ENCODE measurements at regions of chr1 and their contacts with region 1.

Region 1: DNA sequence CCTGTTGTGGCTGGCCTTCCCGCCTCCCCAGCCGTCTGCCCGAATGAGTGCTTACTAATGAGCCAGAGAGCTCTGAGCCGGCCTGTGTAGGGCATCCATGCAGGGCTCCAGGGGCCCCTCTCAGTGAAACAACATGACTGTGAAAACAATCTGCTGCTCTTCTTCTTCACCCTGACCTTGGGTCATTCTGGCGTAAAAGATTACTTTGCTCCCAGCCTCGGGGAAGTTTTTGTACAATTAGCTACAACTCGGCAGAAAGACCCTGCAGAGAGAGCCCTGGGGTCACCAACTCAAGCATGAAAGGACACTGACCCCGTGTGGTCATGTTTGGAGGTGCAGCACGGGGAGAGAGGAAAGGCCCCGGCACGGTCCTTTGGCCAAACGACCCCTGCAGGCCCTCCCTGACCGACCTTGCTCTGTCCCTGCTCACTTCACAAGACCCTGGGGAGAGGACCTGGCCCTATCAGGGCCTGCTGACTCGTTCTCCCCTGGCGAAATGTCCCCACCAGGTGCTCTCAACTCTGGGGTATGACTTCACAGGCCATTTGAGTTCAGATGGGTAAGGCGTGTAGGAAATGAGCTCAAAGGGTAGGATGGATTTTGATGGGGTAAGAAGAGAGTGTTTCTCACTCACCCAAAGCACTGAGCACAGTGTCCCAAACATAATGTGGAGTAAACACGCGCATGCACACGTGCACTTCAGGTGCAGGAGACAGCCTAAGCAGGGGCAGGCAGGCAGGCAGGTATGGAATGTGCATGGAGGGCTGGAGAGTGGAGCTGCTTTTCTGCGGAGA is 22.9 kb upstream of the FAM20B start:
- DNase-seq: peak; percentile 79
- H3K4me3 ChIP-seq: peak overlapping the region in 1 of 2 experiments; percentile 39; a peak in 1 of 4 replicates
- H3K27ac ChIP-seq: no peak overlapping the region
- H3K4me1 ChIP-seq: peaks cover 0 to 2% of the 10 kb centered on the region in 2 experiments; a peak in 1 of 4 replicates
- H3K27me3 ChIP-seq: no peaks in the 10 kb centered on the region
- CTCF ChIP-seq: peak; percentile 96
- EP300 ChIP-seq: no peak
- RAD21 ChIP-seq: peak; percentile 95

Region 2: DNA sequence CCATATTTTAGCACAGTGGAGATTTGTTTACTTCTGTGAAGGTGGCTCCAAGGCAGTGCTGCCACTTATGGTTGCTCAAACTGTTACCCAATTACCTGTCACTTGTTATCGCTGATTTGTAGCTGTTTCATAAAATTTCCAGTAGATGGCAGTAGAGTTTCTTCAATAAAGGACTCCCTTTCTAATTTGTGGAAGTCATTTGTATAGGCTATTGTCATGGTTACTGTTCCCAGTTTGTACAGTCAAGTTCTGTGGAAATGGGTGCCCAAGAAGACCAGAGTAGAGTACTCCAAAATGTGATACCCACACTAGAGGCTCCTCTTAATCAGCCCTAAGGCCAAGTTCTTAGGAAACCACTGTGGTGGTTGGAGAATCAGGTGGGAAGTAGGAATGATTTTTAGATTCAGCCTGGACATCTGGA is 692.1 kb before region 1 on chr1:
- CTCF ChIA-PET with region 1: interaction called, 14 read pairs
- POLR2A ChIA-PET with region 1: no interaction called
- DNase-seq: peak; percentile 50
- H3K4me3 ChIP-seq: no peak overlapping the region
- H3K27ac ChIP-seq: no peak overlapping the region
- H3K4me1 ChIP-seq: no peaks in the 10 kb centered on the region; a peak in 1 of 4 replicates
- H3K27me3 ChIP-seq: no peaks in the 10 kb centered on the region
- CTCF ChIP-seq: peak; percentile 85
- EP300 ChIP-seq: no peak
- RAD21 ChIP-seq: peak; percentile 85

Region 3: DNA sequence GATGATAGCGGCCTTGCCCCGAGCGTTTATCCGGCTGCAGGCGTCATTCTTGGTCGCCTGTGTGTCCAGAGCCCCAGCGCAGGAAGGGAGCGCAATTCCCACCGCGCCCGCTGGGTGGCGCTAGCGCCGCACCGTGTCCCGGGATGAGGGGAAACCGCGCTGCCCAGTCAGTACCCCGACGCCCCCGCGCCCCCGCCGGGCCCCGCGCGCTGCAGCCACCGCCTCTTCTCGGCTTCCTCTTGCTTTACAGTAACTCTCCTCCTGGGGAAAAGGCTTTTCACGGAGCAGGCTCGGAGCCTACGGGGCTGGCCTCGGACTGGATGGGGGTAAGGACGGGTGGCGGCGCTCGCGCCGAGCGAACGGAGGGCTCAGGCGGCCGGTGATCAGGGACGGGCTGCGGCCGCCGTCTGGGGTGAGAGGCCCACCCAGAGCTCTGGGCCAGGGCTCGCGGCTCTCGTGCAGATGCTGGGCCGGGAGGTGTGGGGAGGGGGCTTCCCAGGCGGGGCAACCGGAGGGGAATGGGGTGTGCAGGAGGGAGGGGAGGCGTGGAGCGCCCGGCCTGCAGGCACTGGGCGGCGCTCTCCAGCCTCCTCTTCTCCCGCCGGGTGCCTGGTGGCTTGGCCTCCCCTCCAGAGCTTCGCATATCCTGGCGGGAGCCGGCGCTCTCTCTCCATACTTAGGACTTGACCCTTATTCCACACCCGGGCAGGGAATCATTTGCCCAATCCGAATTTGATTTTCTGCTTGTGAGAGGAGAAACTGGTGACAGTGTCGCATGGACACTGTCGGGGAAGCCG is 460.0 kb before region 1 on chr1:
- CTCF ChIA-PET with region 1: interaction called, 128 read pairs
- POLR2A ChIA-PET with region 1: interaction called, 6 read pairs
- DNase-seq: peak; percentile 94
- H3K4me3 ChIP-seq: peak overlapping the region; percentile 83 to 96
- H3K27ac ChIP-seq: peak overlapping the region; percentile 78 to 90
- H3K4me1 ChIP-seq: peaks cover 26 to 31% of the 10 kb centered on the region in 2 experiments
- H3K27me3 ChIP-seq: no peaks in the 10 kb centered on the region
- CTCF ChIP-seq: peak; percentile 81
- EP300 ChIP-seq: 0 out of 4 replicates have a peak, but pooled peaks of 1 of the 2 experiments have one; percentile 13
- RAD21 ChIP-seq: peak; percentile 77

Region 4: GRCh38 chr1:178774263-178774662 is 228.5 kb before region 1 on chr1:
- CTCF ChIA-PET with region 1: interaction called, 98 read pairs
- POLR2A ChIA-PET with region 1: no interaction called
- DNase-seq: peak; percentile 22
- H3K4me3 ChIP-seq: no peak overlapping the region
- H3K27ac ChIP-seq: no peak overlapping the region
- H3K4me1 ChIP-seq: no peaks in the 10 kb centered on the region
- H3K27me3 ChIP-seq: no peaks in the 10 kb centered on the region
- CTCF ChIP-seq: peak; percentile 61
- EP300 ChIP-seq: no peak
- RAD21 ChIP-seq: peak; percentile 61

Region 5: DNA sequence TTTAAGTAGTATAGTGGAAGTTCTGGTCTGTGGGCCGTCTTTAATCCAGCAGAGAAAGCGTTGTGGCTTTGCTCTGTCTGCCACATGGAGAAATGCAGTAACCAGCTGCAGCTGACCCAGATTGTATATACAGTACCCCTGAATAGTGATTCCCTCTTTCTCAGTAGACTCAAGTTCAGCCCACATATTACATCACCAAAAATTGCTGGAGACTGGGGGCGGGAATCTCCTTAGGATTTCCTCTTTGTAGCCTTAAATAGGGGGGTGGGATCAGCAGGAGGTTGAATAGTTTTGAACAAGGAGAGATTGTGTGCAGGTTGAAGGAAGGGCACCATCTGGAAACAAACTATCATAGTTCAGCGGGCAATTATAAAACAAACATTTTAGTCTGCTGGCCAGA is 131.8 kb before region 1 on chr1 and contains the start of gene ANGPTL1:
- CTCF ChIA-PET with region 1: interaction called, 13 read pairs
- POLR2A ChIA-PET with region 1: no interaction called
- DNase-seq: no peak
- H3K4me3 ChIP-seq: no peak within 1 kb of the TSS
- H3K27ac ChIP-seq: peak within 1 kb of the TSS in 1 of 2 experiments; percentile 53; a peak in 2 of 4 replicates
- H3K4me1 ChIP-seq: peaks cover 19 to 27% of the 10 kb centered on the region in 2 experiments; a peak in 3 of 4 replicates
- H3K27me3 ChIP-seq: no peaks in the 10 kb centered on the region
- CTCF ChIP-seq: no peak
- EP300 ChIP-seq: no peak
- RAD21 ChIP-seq: no peak
- polyA plus RNA-seq, gene ANGPTL1: not detected in 2 replicates

Region 6: DNA sequence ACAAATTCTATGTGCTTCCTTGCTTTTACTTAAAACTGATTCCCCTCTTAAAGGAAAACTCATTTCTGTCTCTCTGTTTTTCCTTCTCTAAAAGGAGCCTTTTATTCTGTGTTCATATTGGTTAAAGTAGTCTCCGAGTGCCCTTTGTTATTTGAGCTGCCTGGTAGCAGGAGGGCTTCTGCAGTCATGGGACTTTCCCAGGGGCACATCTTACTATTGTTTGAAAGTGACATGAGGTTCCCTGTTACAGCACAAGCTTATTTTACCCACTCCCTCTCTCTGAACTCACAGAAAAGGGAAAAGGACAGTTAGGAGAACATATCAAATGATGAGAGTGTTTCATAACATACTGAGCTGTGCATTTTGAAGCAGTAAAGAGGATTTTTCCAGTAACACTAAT is 73.8 kb before region 1 on chr1:
- CTCF ChIA-PET with region 1: no interaction called
- POLR2A ChIA-PET with region 1: no interaction called
- DNase-seq: no peak
- H3K4me3 ChIP-seq: no peak overlapping the region
- H3K27ac ChIP-seq: no peak overlapping the region
- H3K4me1 ChIP-seq: no peaks in the 10 kb centered on the region; a peak in 1 of 4 replicates
- H3K27me3 ChIP-seq: no peaks in the 10 kb centered on the region
- CTCF ChIP-seq: no peak
- EP300 ChIP-seq: no peak
- RAD21 ChIP-seq: no peak

Region 7: GRCh38 chr1:179025975-179026812 is 23.4 kb after region 1 on chr1:
- CTCF ChIA-PET with region 1: interaction called, 17 read pairs
- POLR2A ChIA-PET with region 1: no interaction called
- DNase-seq: peak; percentile 93
- H3K4me3 ChIP-seq: peak overlapping the region; percentile 65 to 96
- H3K27ac ChIP-seq: peak overlapping the region; percentile 89 to 96
- H3K4me1 ChIP-seq: peaks cover 10 to 23% of the 10 kb centered on the region in 2 experiments; a peak in 3 of 4 replicates
- H3K27me3 ChIP-seq: no peaks in the 10 kb centered on the region
- CTCF ChIP-seq: no peak
- EP300 ChIP-seq: no peak
- RAD21 ChIP-seq: no peak

Measured in SK-N-SH (cell line).